AG04449 (cell line): ENCODE measurements at regions of chr17 and their contacts with region 1.

Region 1: GRCh38 chr17:78421484-78422266 is 43.2 kb downstream of the PGS1 start:
- DNase-seq: peak; percentile 14
- H3K4me3 ChIP-seq: no peak overlapping the region
- CTCF ChIP-seq: peak; percentile 99

Region 2: GRCh38 chr17:78250891-78251794 is 170.5 kb before region 1 on chr17:
- CTCF ChIA-PET with region 1: interaction called, 177 read pairs
- POLR2A ChIA-PET with region 1: no interaction called
- DNase-seq: no peak
- H3K4me3 ChIP-seq: no peak overlapping the region
- CTCF ChIP-seq: peak; percentile 100

Region 3: GRCh38 chr17:78289802-78290363 is 131.8 kb before region 1 on chr17:
- CTCF ChIA-PET with region 1: interaction called, 53 read pairs
- POLR2A ChIA-PET with region 1: no interaction called
- DNase-seq: peak; percentile 53
- H3K4me3 ChIP-seq: no peak overlapping the region
- CTCF ChIP-seq: peak; percentile 93

Region 4: GRCh38 chr17:78383725-78384471 is 37.8 kb before region 1 on chr17:
- CTCF ChIA-PET with region 1: interaction called, 30 read pairs
- POLR2A ChIA-PET with region 1: no interaction called
- DNase-seq: peak; percentile 99
- H3K4me3 ChIP-seq: peak overlapping the region; percentile 3; the same call in 1 of the 2 replicates
- CTCF ChIP-seq: no peak

Region 5: GRCh38 chr17:78401246-78401645 is 20.4 kb before region 1 on chr17:
- CTCF ChIA-PET with region 1: interaction called, 87 read pairs
- POLR2A ChIA-PET with region 1: no interaction called
- DNase-seq: no peak
- H3K4me3 ChIP-seq: no peak overlapping the region
- CTCF ChIP-seq: no peak

Region 6: DNA sequence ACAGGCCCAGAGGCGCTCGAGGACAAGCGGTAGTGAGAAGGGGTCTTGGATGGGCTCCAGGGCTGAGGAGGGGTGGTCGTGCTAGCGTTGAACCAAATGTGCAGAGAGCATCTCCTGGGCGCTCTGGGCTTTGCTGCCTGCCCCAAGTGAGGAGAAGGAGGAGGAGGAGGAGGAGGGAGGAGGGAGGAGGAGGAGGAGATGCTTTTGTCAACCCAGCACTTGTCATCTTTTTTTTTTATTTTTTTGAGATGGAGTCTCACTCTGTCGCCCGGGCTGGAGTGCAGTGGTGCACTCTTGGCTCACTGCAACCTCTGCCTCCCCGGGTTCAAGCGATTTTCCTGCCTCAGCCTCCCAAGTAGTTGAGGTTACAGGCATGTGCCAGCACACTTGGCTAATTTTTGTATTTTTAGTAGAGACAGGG is 16.6 kb after region 1 on chr17:
- CTCF ChIA-PET with region 1: interaction called, 30 read pairs
- POLR2A ChIA-PET with region 1: no interaction called
- DNase-seq: no peak
- H3K4me3 ChIP-seq: no peak overlapping the region
- CTCF ChIP-seq: no peak

Region 7: DNA sequence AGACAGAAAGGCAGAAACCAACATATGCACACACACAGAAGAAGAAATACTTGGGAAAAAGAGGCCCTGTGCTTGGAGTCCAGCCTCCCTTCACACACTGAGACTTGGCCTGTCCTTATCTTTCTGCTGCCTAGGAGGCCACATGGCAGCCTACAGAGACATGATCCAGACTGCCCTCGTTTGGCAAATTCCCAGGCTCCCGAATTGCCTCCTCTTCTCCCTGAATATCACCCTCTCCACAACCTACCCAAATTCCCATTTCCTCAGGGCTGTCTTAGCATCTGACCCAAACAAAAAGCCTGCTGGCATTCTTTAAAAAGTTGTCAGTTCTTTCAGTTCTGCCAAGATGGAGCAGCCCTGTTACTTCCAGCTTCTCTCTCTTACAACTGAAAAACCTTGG is 95.7 kb after region 1 on chr17:
- CTCF ChIA-PET with region 1: no interaction called
- POLR2A ChIA-PET with region 1: no interaction called
- DNase-seq: no peak
- H3K4me3 ChIP-seq: no peak overlapping the region
- CTCF ChIP-seq: no peak